A673 (cell line): ENCODE measurements at regions of chr20 and their contacts with region 1.

Region 1: GRCh38 chr20:51624157-51624731 is 81.7 kb upstream of the NFATC2 start:
- DNase-seq: peak; percentile 77
- H3K4me3 ChIP-seq: no peak overlapping the region
- H3K27ac ChIP-seq: no peak overlapping the region
- H3K4me1 ChIP-seq: peaks cover 3% of the 10 kb centered on the region
- H3K27me3 ChIP-seq: no peaks in the 10 kb centered on the region
- CTCF ChIP-seq: peak; percentile 81

Region 2: GRCh38 chr20:51385646-51386530 is 238.4 kb before region 1 on chr20:
- CTCF ChIA-PET with region 1: interaction called, 13 read pairs
- POLR2A ChIA-PET with region 1: no interaction called
- intact Hi-C with region 1: no loop called
- DNase-seq: peak; percentile 57
- H3K4me3 ChIP-seq: no peak overlapping the region
- H3K27ac ChIP-seq: no peak overlapping the region
- H3K4me1 ChIP-seq: peaks cover 7% of the 10 kb centered on the region
- H3K27me3 ChIP-seq: no peaks in the 10 kb centered on the region
- CTCF ChIP-seq: peak; percentile 64

Region 3: DNA sequence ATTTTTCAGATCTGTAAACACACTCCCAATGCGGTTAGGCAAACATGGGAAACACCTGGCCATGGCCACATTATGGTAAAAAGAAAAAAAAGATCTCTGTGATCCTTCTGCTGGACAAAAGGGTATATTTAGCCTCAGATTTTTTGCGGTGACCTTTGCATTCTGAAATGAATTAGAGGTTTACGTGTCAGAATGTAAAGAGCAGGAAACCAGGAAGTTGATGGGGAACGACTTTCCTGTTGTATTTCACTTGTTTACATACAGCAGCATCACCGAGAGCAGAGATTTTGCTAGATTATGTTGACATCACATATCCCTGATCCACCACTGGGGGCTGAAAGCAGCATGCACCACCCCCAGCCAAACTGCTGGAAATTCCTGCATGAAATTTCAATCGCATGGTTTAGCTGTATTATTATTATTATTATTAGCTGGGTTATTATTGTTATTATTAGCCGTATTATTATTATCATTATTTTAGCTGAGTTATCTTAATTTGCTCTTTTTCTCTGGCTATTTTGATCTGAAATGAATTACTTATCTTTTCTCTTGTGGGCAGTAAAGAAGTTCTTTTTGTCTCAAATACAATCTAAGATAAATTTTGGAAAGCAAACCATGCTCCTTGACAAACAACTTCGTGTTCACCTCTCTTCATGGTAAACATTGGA is 377.9 kb after region 1 on chr20:
- CTCF ChIA-PET with region 1: no interaction called
- POLR2A ChIA-PET with region 1: no interaction called
- intact Hi-C with region 1: no loop called
- DNase-seq: peak; percentile 56
- H3K4me3 ChIP-seq: no peak overlapping the region
- H3K27ac ChIP-seq: peak overlapping the region; percentile 60
- H3K4me1 ChIP-seq: peaks cover 39% of the 10 kb centered on the region
- H3K27me3 ChIP-seq: no peaks in the 10 kb centered on the region
- CTCF ChIP-seq: peak; percentile 40; the same call in 1 of the 2 replicates